Activated naive CD4-positive, alpha-beta T cell treated with anti-CD3 and anti-CD28 coated beads for 36 hours (primary cell): ENCODE measurements at regions of chr5 and their contacts with region 1.

Region 1: GRCh38 chr5:122774861-122775549 is at the start of gene SNX2:
- DNase-seq: peak; percentile 89
- H3K4me3 Mint-ChIP-seq: peak within 1 kb of the TSS; percentile 89
- H3K27ac Mint-ChIP-seq: peak within 1 kb of the TSS; percentile 78
- H3K4me1 Mint-ChIP-seq: peaks cover 24% of the 10 kb centered on the region
- H3K27me3 Mint-ChIP-seq: no peaks in the 10 kb centered on the region
- total RNA-seq, gene SNX2: 47.3 to 48.0 TPM

Region 2: DNA sequence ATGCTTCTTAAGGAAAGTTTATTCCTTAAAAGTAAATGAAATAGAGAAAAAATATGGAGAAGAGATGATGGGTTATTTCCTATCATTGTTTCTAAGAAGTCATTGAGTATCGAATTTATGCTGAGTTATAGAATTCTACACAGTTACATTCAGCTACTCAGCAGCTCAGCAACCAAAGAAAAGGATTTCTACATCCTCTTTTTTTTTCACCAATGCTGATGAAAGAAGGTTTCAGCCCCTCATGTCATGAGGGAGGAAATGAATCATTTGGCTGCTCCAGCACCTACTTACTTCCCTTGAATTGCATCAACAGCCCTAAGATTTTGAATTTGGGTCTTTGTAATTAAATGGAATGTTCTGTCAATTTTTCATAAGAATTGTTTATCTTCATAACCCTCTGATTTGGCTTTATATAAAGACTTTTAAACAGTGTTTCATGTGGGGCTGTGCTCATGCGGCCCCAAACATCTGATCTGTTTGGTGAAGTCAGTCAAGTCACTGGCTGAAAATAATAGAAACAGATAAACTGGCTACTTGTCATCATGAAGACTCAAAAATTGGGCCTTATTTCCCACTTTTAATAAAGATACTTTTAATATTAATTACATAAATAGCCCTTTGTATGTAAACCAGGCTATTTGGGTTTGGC is 18.6 kb before region 1 on chr5:
- CTCF ChIA-PET with region 1: no interaction called
- intact Hi-C with region 1: loop called (anchors 1 kb)
- DNase-seq: no peak
- H3K4me3 Mint-ChIP-seq: no peak overlapping the region
- H3K27ac Mint-ChIP-seq: no peak overlapping the region
- H3K4me1 Mint-ChIP-seq: peaks cover 7% of the 10 kb centered on the region
- H3K27me3 Mint-ChIP-seq: peaks cover 3% of the 10 kb centered on the region

Region 3: GRCh38 chr5:122896598-122897282 is 121.7 kb after region 1 on chr5:
- CTCF ChIA-PET with region 1: no interaction called
- intact Hi-C with region 1: no loop called
- DNase-seq: no peak
- H3K4me3 Mint-ChIP-seq: no peak overlapping the region
- H3K27ac Mint-ChIP-seq: no peak overlapping the region
- H3K4me1 Mint-ChIP-seq: no peaks in the 10 kb centered on the region
- H3K27me3 Mint-ChIP-seq: no peaks in the 10 kb centered on the region